HepG2 (cell line): ENCODE measurements at regions of chr21 and their contacts with region 1.

Region 1: DNA sequence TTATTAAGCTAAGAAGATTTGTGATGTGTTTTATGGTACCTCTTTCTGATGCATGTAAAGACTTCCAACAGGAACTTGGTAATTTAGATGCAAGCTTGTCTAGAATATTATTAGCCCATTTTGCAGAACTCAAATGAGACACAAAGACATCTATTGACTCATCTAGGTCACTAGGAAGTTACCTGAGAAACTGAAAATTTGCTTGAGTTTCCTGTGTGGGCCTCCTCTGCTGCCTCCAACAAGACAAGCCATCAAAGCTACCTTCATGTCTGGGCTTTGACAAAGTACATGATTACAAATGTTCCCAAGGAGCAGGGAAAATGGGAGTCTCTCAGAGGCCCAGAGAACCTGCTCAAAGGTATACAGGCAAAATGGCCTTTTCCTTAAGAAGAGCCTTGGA is 5.6 kb downstream of the RUNX1 start:
- DNase-seq: no peak
- ATAC-seq: no peak
- H3K4me3 ChIP-seq: no peak overlapping the region
- H3K27ac ChIP-seq: no peak overlapping the region
- H3K4me1 ChIP-seq: peaks cover 60% of the 10 kb centered on the region
- H3K27me3 ChIP-seq: no peaks in the 10 kb centered on the region
- CTCF ChIP-seq: no peak
- EP300 ChIP-seq: no peak
- POLR2A ChIP-seq: no peak
- RAD21 ChIP-seq: no peak

Region 2: DNA sequence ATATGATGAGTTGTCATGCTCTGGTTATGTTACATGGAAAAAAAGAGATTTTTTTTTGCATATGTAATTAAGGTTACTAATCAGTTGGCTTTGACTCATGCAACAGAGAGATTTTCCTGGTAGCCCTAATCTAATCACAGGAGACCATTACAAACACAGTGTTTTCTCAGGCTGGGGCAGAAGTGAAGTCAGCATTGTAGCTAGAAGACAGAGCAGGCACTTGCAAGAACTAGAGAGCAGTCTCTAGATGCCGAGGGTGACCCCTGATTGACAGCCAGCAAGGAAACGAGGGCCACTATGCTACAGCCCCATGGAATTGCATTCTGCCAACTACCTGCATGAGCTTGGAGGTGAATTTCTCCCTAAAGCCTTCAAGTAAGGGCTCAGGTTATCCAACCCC is 145.7 kb before region 1 on chr21:
- CTCF ChIA-PET with region 1: no interaction called
- POLR2A ChIA-PET with region 1: no interaction called
- in situ Hi-C with region 1: loop called (anchors 5 kb)
- intact Hi-C with region 1: no loop called
- DNase-seq: no peak
- ATAC-seq: no peak
- H3K4me3 ChIP-seq: no peak overlapping the region
- H3K27ac ChIP-seq: no peak overlapping the region
- H3K4me1 ChIP-seq: no peaks in the 10 kb centered on the region
- H3K27me3 ChIP-seq: no peaks in the 10 kb centered on the region; a peak in 1 of 5 replicates
- CTCF ChIP-seq: no peak
- EP300 ChIP-seq: no peak
- POLR2A ChIP-seq: no peak
- RAD21 ChIP-seq: no peak

Region 3: GRCh38 chr21:34908419-34909055 is 135.0 kb before region 1 on chr21:
- CTCF ChIA-PET with region 1: no interaction called
- POLR2A ChIA-PET with region 1: interaction called, 3 read pairs
- in situ Hi-C with region 1: no loop called
- intact Hi-C with region 1: loop called (anchors 5 kb)
- DNase-seq: peak; percentile 90
- ATAC-seq: peak; percentile 81
- H3K4me3 ChIP-seq: no peak overlapping the region
- H3K27ac ChIP-seq: no peak overlapping the region
- H3K4me1 ChIP-seq: peaks cover 52% of the 10 kb centered on the region
- H3K27me3 ChIP-seq: no peaks in the 10 kb centered on the region
- CTCF ChIP-seq: no peak
- EP300 ChIP-seq: peak; percentile 50 to 94; a peak in 2 of 4 replicates
- POLR2A ChIP-seq: no peak
- RAD21 ChIP-seq: no peak

Region 4: GRCh38 chr21:35019631-35020032 is 23.9 kb before region 1 on chr21:
- CTCF ChIA-PET with region 1: no interaction called
- POLR2A ChIA-PET with region 1: interaction called, 10 read pairs
- in situ Hi-C with region 1: no loop called
- intact Hi-C with region 1: loop called (anchors 2 kb)
- DNase-seq: peak; percentile 94
- ATAC-seq: peak; percentile 89
- H3K4me3 ChIP-seq: peak overlapping the region in 1 of 3 experiments; percentile 36; a peak in 1 of 6 replicates
- H3K27ac ChIP-seq: peak overlapping the region; percentile 79
- H3K4me1 ChIP-seq: peaks cover 89% of the 10 kb centered on the region
- H3K27me3 ChIP-seq: no peaks in the 10 kb centered on the region
- CTCF ChIP-seq: no peak
- EP300 ChIP-seq: peak in 1 of 2 experiments; percentile 64; a peak in 2 of 4 replicates
- POLR2A ChIP-seq: 0 out of 4 replicates have a peak, but pooled peaks of 1 of the 2 experiments have one; percentile 32
- RAD21 ChIP-seq: no peak

Region 5: GRCh38 chr21:35026617-35027562 is 16.7 kb before region 1 on chr21:
- CTCF ChIA-PET with region 1: no interaction called
- POLR2A ChIA-PET with region 1: interaction called, 6 read pairs
- in situ Hi-C with region 1: no loop called
- intact Hi-C with region 1: loop called (anchors 2 kb)
- DNase-seq: peak; percentile 95
- ATAC-seq: peak; percentile 86
- H3K4me3 ChIP-seq: no peak overlapping the region
- H3K27ac ChIP-seq: peak overlapping the region; percentile 73
- H3K4me1 ChIP-seq: peaks cover 71% of the 10 kb centered on the region
- H3K27me3 ChIP-seq: no peaks in the 10 kb centered on the region
- CTCF ChIP-seq: no peak
- EP300 ChIP-seq: peak; percentile 39 to 80; a peak in 2 of 4 replicates
- POLR2A ChIP-seq: 0 out of 4 replicates have a peak, but pooled peaks of 1 of the 2 experiments have one; percentile 31
- RAD21 ChIP-seq: no peak